ENCODE measurements at regions of chr14 and their contacts with region 1.

Region 1: DNA sequence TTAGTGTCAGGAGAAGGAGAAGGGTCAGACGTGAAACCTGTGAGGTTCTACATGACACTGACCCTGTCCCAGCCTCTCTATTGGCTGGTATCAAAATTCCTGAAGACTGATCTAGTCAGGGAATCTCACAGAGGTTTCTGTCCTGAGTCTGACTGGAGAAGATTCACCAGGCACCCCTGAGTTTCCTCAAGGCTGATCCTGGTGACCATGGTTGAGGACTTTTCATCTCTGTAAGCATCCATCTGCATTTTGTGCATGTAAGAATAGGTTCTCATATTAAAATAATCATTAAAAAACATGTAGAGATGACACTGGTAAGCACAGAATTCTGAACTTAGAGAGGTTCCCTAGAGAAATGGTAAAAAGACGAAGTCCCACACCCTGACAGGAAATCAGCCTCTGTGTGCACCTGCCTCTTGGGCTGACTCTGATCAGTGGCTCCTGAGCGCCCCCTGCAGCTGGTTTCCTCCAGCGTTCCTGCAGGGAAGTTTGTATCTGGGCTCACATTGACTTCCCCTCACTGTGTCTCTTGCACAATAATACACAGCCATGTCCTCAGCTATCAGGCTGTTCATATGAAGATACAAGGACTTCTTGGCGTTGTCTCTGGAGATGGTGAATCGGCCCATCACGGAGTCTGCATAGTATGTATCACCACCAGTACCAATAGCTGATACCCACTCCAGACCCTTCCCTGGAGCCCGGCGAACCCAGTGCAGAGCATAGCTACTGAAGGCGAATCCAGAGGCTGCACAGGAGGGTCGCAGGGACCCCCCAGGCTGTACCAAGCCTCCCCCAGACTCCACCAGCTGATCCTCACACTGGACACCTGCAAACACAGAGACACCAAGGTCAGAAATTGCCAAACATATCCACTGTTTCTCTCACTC is 991.9 kb downstream of the TMEM121 start:
- DNase-seq: peak; percentile 93
- H3K4me3 Mint-ChIP-seq: no peak overlapping the region
- H3K27ac Mint-ChIP-seq: no peak overlapping the region
- H3K4me1 Mint-ChIP-seq: peaks cover 19% of the 10 kb centered on the region
- H3K27me3 Mint-ChIP-seq: peaks cover 3% of the 10 kb centered on the region

Region 2: GRCh38 chr14:106277503-106277902 is 240.8 kb before region 1 on chr14:
- CTCF ChIA-PET with region 1: no interaction called
- intact Hi-C with region 1: no loop called
- DNase-seq: peak; percentile 50
- H3K4me3 Mint-ChIP-seq: no peak overlapping the region
- H3K27ac Mint-ChIP-seq: no peak overlapping the region
- H3K4me1 Mint-ChIP-seq: peaks cover 17% of the 10 kb centered on the region
- H3K27me3 Mint-ChIP-seq: peaks cover 25% of the 10 kb centered on the region

Region 3: GRCh38 chr14:106436310-106436905 is 81.9 kb before region 1 on chr14:
- CTCF ChIA-PET with region 1: interaction called, 26 read pairs
- intact Hi-C with region 1: loop called (anchors 1 kb)
- DNase-seq: peak; percentile 75
- H3K4me3 Mint-ChIP-seq: no peak overlapping the region
- H3K27ac Mint-ChIP-seq: no peak overlapping the region
- H3K4me1 Mint-ChIP-seq: peaks cover 7% of the 10 kb centered on the region
- H3K27me3 Mint-ChIP-seq: peaks cover 10% of the 10 kb centered on the region

Region 4: DNA sequence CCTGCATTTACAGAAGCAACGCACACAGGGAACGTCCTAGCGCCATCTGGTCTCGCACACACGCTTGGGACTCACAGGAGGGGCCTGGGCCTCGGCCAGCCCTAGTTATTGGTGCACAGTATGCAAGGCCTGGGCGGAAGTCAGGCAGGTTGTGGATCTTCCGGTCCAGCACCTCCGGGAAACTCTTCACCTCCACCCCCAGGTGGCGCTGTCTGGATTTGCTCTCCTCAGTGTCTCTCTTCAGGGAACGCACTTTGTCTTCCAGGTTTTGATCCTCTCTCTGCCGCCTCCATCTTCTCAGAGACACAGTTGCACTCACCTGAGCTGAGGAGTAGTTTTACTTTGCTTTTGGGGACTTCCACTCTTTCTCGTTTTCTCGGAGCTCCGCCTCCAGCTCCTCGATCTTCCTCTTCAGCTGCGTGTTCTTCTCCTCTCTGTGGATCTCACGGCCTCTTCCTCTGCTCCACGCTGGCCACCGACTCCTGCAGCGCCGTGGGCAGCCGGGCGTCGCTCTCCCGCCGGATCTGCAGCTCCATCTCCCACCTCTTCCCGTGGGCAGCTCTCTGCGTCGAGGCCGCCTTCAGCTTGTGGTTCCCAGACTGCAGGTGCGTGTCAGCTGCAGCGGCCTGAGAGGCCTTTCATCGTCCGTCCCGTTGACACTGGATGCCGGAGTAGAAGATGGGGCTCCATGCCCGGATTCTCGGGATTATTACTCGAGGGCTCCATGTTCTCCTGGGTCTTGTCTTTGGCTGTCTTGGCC is 58.1 kb before region 1 on chr14:
- CTCF ChIA-PET with region 1: interaction called, 9 read pairs
- intact Hi-C with region 1: loop called (anchors 2 kb)
- DNase-seq: peak; percentile 75
- H3K4me3 Mint-ChIP-seq: no peak overlapping the region
- H3K27ac Mint-ChIP-seq: no peak overlapping the region
- H3K4me1 Mint-ChIP-seq: no peaks in the 10 kb centered on the region
- H3K27me3 Mint-ChIP-seq: no peaks in the 10 kb centered on the region